ENCODE measurements at regions of chr17 and their contacts with region 1.

Region 1: GRCh38 chr17:59466946-59467801 is 98.2 kb upstream of the DHX40 start:
- DNase-seq: no peak
- ATAC-seq: no peak; the same call in 2 of the 3 replicates
- H3K4me3 ChIP-seq: no peak overlapping the region
- H3K27ac ChIP-seq: no peak overlapping the region
- H3K4me1 ChIP-seq: no peaks in the 10 kb centered on the region; a peak in 1 of 5 replicates
- H3K27me3 ChIP-seq: peaks cover 13 to 16% of the 10 kb centered on the region in 2 experiments; a peak in 3 of 5 replicates
- CTCF ChIP-seq: no peak
- EP300 ChIP-seq: no peak
- POLR2A ChIP-seq: no peak
- RAD21 ChIP-seq: no peak

Region 2: GRCh38 chr17:58710936-58711775 is 756.0 kb before region 1 on chr17:
- CTCF ChIA-PET with region 1: no interaction called
- POLR2A ChIA-PET with region 1: no interaction called
- in situ Hi-C with region 1: no loop called
- intact Hi-C with region 1: no loop called
- DNase-seq: peak; percentile 21 to 73 (median 23)
- ATAC-seq: peak; percentile 68
- H3K4me3 ChIP-seq: no peak overlapping the region
- H3K27ac ChIP-seq: no peak overlapping the region
- H3K4me1 ChIP-seq: peaks cover 2 to 7% of the 10 kb centered on the region in 2 experiments; a peak in 3 of 5 replicates
- H3K27me3 ChIP-seq: no peaks in the 10 kb centered on the region
- CTCF ChIP-seq: peak in 2 of 3 experiments; percentile 57 to 85; a peak in 4 of 6 replicates
- EP300 ChIP-seq: no peak
- POLR2A ChIP-seq: no peak
- RAD21 ChIP-seq: peak; percentile 87 to 94

Region 3: GRCh38 chr17:59357929-59358328 is 109.2 kb before region 1 on chr17:
- CTCF ChIA-PET with region 1: no interaction called
- POLR2A ChIA-PET with region 1: no interaction called
- in situ Hi-C with region 1: no loop called
- intact Hi-C with region 1: no loop called
- DNase-seq: no peak
- ATAC-seq: no peak
- H3K4me3 ChIP-seq: no peak overlapping the region
- H3K27ac ChIP-seq: no peak overlapping the region
- H3K4me1 ChIP-seq: no peaks in the 10 kb centered on the region
- H3K27me3 ChIP-seq: peaks cover 8 to 23% of the 10 kb centered on the region in 2 experiments; a peak in 4 of 5 replicates
- CTCF ChIP-seq: no peak
- EP300 ChIP-seq: no peak
- POLR2A ChIP-seq: no peak
- RAD21 ChIP-seq: no peak

Region 4: GRCh38 chr17:59482048-59482447 is 14.9 kb after region 1 on chr17:
- CTCF ChIA-PET with region 1: no interaction called
- POLR2A ChIA-PET with region 1: no interaction called
- in situ Hi-C with region 1: no loop called
- intact Hi-C with region 1: no loop called
- DNase-seq: no peak
- ATAC-seq: no peak
- H3K4me3 ChIP-seq: no peak overlapping the region
- H3K27ac ChIP-seq: no peak overlapping the region
- H3K4me1 ChIP-seq: no peaks in the 10 kb centered on the region
- H3K27me3 ChIP-seq: peaks cover 4 to 18% of the 10 kb centered on the region in 2 experiments; a peak in 4 of 5 replicates
- CTCF ChIP-seq: no peak
- EP300 ChIP-seq: no peak
- POLR2A ChIP-seq: no peak
- RAD21 ChIP-seq: no peak

Region 5: GRCh38 chr17:61208301-61209105 is 1741.3 kb after region 1 on chr17:
- CTCF ChIA-PET with region 1: no interaction called
- POLR2A ChIA-PET with region 1: no interaction called
- in situ Hi-C with region 1: loop called (anchors 10 kb)
- intact Hi-C with region 1: no loop called
- DNase-seq: no peak
- ATAC-seq: no peak
- H3K4me3 ChIP-seq: no peak overlapping the region
- H3K27ac ChIP-seq: no peak overlapping the region
- H3K4me1 ChIP-seq: no peaks in the 10 kb centered on the region
- H3K27me3 ChIP-seq: peaks cover 5% of the 10 kb centered on the region in 2 experiments; a peak in 3 of 5 replicates
- CTCF ChIP-seq: no peak
- EP300 ChIP-seq: no peak
- POLR2A ChIP-seq: no peak
- RAD21 ChIP-seq: no peak